A673 (cell line): ENCODE measurements at regions of chr1 and their contacts with region 1.

Region 1: DNA sequence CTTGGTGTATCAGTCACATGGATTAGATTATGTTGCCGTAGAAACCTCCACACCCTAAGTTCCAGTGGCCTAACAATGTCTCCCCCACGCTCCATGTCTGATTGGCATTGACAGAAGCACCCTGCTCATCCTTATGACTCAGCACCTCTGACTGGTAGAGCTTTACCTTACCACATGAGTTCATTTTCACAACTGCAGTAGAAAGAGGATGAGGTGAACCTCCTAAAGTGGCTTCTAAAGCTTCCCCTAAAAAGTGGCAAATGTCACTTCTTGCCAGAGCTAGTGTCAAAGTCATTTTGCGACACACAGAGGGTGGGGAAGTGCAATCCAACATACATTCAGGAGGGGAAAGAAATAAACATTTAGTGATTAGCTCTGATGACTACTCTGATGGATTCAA is 30.6 kb upstream of the LYPD8 start:
- DNase-seq: no peak
- H3K4me3 ChIP-seq: no peak overlapping the region
- H3K27ac ChIP-seq: no peak overlapping the region
- H3K4me1 ChIP-seq: no peaks in the 10 kb centered on the region
- H3K27me3 ChIP-seq: no peaks in the 10 kb centered on the region
- CTCF ChIP-seq: no peak

Region 2: DNA sequence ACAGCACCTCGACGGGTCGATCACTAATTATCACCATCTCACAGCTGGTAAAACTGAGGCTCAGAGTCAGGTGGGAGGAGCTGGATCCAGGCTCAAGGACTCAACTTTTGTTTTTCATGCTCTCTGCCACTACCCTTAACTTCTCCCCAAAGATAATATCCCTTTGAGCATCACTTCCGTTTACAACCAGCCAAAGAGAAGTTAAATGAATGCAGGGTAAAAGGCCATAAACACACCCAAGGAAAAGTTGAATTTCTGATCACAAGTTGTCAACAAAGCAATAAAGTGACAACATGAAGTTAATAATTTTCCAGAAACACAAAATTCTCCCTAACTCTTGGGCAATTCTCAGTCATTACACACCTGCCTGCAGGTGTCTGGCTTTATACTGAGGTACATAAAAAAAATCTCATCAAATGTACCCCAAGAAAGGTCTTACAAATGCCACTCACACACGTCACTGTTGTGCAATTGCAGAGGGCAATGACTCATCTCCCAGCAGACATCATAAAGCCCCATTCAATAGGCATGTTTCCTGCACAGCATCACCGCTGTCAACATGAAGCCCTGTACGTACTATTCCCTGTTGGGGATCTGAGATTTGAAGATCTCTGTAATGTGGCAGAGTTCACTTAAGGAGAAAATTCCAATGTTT is 154.7 kb before region 1 on chr1:
- CTCF ChIA-PET with region 1: no interaction called
- POLR2A ChIA-PET with region 1: no interaction called
- intact Hi-C with region 1: loop called (anchors 5 kb)
- DNase-seq: peak; percentile 93
- H3K4me3 ChIP-seq: no peak overlapping the region
- H3K27ac ChIP-seq: peak overlapping the region; percentile 77
- H3K4me1 ChIP-seq: peaks cover 18% of the 10 kb centered on the region
- H3K27me3 ChIP-seq: no peaks in the 10 kb centered on the region
- CTCF ChIP-seq: no peak